ENCODE measurements at regions of chrX and their contacts with region 1.

Region 1: DNA sequence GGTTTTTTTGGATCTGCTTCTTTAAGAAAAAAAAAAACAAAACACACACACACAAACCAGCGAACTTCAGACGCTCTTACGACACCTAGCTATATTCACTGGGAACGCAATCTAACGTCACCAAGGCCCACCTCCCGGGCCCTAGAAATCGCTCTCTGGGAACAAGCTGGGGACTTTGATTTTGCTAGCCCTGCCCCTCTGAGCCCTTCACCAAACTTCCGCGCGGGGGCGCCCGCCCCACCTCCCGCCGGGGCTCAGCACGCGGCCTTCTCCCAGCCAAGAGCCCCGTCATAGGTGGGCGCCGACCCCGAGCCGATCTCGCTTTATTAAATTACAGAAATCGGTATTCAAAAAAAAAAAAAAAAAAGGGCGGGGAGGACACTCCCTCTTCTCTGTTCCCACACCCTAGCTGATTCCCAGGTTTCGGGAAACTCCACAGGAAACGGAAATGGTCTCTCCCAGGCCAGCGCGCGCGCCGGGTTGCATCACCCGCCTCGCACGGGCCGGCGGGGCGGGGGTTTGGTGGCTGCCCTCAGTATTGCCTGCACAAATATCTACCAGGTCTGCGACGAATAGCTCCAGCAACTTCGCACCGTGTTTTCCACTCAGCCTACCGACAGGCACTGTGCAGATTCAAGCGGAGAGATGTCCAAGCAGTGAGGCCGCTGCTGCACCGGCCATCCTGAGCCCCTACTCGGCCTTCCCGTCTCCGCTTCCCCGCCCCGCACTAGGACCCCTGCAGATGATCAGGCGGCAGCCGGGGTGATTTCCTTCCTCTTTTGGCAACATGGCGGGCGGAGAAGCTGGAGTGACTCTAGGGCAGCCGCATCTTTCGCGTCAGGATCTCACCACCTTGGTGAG is at the start of gene EIF2S3:
- DNase-seq: peak; percentile 88
- H3K4me3 Mint-ChIP-seq: no peak within 1 kb of the TSS
- H3K27ac Mint-ChIP-seq: no peak within 1 kb of the TSS
- H3K4me1 Mint-ChIP-seq: peaks cover 4% of the 10 kb centered on the region
- H3K27me3 Mint-ChIP-seq: no peaks in the 10 kb centered on the region
- total RNA-seq, gene EIF2S3: 282 to 295 TPM

Region 2: DNA sequence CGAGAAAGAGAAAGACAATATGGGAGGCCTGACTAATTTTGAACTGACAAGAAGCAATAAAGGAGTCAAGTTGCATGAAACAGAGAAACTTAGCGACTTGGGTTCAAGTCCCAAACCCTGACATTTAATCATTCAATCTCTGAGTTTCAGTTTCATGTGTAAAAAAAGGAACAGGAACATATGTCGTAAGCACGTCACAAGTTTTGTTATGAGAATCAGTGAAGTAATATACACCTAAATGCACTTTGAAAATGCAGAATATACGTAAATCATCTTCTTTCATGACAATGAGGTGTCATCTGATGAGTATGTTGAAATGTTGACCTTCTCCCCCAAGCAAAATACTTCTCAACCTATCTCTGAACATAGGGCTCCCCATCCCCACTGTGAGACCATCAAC is 321.7 kb before region 1 on chrX:
- CTCF ChIA-PET with region 1: no interaction called
- POLR2A ChIA-PET with region 1: no interaction called
- intact Hi-C with region 1: loop called (anchors 1 kb)
- DNase-seq: no peak
- H3K4me3 Mint-ChIP-seq: peak overlapping the region; percentile 7
- H3K27ac Mint-ChIP-seq: peak overlapping the region; percentile 92
- H3K4me1 Mint-ChIP-seq: peaks cover 33% of the 10 kb centered on the region
- H3K27me3 Mint-ChIP-seq: no peaks in the 10 kb centered on the region

Region 3: DNA sequence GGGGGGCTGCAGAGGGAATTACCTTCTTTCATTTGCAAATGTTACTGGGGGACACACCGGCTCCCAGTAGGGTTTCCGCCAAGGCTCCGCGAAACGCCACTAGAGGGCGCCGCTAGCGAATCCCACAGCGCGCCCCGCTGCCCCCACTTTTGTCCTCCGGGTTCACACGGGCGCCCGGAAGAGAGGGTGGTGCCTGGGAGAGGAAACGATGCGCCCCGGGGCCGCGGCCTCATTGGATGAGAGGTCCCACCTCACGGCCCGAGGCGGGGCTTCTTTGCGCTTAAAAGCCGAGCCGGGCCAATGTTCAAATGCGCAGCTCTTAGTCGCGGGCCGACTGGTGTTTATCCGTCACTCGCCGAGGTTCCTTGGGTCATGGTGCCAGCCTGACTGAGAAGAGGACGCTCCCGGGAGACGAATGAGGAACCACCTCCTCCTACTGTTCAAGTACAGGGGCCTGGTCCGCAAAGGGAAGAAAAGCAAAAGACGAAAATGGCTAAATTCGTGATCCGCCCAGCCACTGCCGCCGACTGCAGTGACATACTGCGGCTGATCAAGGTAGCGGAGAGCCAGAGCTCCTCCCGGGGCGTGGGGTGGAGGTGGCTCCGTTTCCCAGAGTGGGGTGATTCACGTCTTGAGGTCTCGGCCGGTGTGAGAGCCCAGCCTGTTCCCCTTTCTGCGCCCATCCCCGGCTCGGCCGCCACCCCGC is 271.4 kb before region 1 on chrX and contains the start of gene SAT1:
- CTCF ChIA-PET with region 1: interaction called, 6 read pairs
- POLR2A ChIA-PET with region 1: no interaction called
- intact Hi-C with region 1: loop called (anchors 1 kb)
- DNase-seq: peak; percentile 95
- H3K4me3 Mint-ChIP-seq: peak within 1 kb of the TSS; percentile 94
- H3K27ac Mint-ChIP-seq: peak within 1 kb of the TSS; percentile 96
- H3K4me1 Mint-ChIP-seq: peaks cover 28% of the 10 kb centered on the region
- H3K27me3 Mint-ChIP-seq: no peaks in the 10 kb centered on the region
- total RNA-seq, gene SAT1: 205 to 209 TPM

Region 4: GRCh38 chrX:23907498-23908218 is 146.8 kb before region 1 on chrX and contains the starts of genes APOO and CXorf58:
- CTCF ChIA-PET with region 1: interaction called, 36 read pairs
- POLR2A ChIA-PET with region 1: interaction called, 21 read pairs
- intact Hi-C with region 1: loop called (anchors 1 kb)
- DNase-seq: peak; percentile 94
- H3K4me3 Mint-ChIP-seq: peak within 1 kb of the TSS; percentile 74
- H3K27ac Mint-ChIP-seq: peak within 1 kb of the TSS; percentile 87
- H3K4me1 Mint-ChIP-seq: peaks cover 21% of the 10 kb centered on the region
- H3K27me3 Mint-ChIP-seq: no peaks in the 10 kb centered on the region
- total RNA-seq, gene APOO: 32.8 to 35.0 TPM
- total RNA-seq, gene CXorf58: 0.17 TPM in 1 of 2 experiments, not detected in the other

Region 5: DNA sequence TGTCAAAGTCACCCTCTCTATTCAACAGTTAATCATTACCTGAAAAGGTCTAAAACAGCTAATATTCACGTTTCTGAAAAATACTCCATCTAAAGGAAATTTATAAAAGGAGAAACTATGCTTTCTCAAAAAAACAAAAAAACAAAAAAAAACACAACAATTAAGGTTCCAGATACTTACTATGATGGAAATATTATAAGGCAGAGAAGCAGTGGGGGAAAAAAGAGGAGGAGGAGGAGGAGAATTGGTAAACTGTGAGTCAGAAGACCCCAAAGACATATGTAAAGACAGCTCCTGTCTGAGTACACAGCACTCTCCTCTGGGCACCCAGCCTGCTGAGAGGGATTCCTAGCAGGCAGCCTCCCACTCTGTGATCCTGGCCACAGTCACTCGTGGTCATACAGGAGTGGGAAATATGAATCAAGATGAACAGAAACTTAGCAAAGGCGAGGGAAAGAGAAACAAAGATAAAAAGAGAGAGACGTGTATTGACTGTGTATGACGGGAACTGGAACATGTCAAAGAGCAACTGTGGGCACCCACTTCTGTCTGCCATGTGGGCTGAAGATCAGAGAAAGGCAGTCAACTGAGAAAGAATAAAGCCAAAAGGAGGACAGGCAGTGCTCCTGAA is 39.9 kb before region 1 on chrX:
- CTCF ChIA-PET with region 1: interaction called, 8 read pairs
- POLR2A ChIA-PET with region 1: no interaction called
- intact Hi-C with region 1: loop called (anchors 5 kb)
- DNase-seq: peak; percentile 76
- H3K4me3 Mint-ChIP-seq: peak overlapping the region; percentile 33
- H3K27ac Mint-ChIP-seq: peak overlapping the region; percentile 84
- H3K4me1 Mint-ChIP-seq: peaks cover 36% of the 10 kb centered on the region
- H3K27me3 Mint-ChIP-seq: no peaks in the 10 kb centered on the region

Region 6: DNA sequence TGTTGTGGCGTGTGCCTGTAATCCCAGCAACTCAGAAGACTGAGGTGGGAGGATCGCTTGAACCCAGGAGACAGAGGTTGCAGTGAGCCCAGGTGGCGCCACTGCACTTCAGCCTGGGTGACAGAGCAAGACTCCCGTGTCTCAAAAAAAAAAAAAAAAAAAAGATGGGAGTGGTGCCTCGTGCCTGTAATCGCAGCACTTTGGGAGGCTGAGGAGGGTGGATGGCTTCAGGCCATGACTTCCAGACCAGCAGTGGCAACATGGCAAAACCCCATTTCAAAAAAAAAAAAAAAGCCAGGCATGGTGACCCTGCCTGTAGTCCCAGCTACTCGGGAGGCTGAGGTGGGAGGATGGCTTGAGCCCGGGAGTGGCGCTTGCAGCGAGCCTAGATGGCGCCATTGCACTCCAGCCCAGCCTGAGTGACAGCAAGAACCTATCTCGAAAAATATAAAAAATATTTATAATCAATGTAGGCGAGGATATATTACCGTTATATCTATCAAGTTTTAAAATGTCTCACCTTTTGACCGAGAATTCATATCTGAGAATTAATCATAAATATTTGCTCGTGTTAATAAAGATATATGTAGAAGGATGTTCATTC is 27.4 kb after region 1 on chrX:
- CTCF ChIA-PET with region 1: interaction called, 6 read pairs
- POLR2A ChIA-PET with region 1: interaction called, 3 read pairs
- intact Hi-C with region 1: loop called (anchors 2 kb)
- DNase-seq: peak; percentile 70
- H3K4me3 Mint-ChIP-seq: no peak overlapping the region
- H3K27ac Mint-ChIP-seq: no peak overlapping the region
- H3K4me1 Mint-ChIP-seq: peaks cover 16% of the 10 kb centered on the region
- H3K27me3 Mint-ChIP-seq: no peaks in the 10 kb centered on the region

Measured in activated CD4-positive, alpha-beta memory T cell treated with anti-CD3 and anti-CD28 coated beads for 36 hours (primary cell).